Activated CD4-positive, alpha-beta T cell treated with anti-CD3 and anti-CD28 coated beads for 36 hours (primary cell): ENCODE measurements at regions of chr11 and their contacts with region 1.

Region 1: DNA sequence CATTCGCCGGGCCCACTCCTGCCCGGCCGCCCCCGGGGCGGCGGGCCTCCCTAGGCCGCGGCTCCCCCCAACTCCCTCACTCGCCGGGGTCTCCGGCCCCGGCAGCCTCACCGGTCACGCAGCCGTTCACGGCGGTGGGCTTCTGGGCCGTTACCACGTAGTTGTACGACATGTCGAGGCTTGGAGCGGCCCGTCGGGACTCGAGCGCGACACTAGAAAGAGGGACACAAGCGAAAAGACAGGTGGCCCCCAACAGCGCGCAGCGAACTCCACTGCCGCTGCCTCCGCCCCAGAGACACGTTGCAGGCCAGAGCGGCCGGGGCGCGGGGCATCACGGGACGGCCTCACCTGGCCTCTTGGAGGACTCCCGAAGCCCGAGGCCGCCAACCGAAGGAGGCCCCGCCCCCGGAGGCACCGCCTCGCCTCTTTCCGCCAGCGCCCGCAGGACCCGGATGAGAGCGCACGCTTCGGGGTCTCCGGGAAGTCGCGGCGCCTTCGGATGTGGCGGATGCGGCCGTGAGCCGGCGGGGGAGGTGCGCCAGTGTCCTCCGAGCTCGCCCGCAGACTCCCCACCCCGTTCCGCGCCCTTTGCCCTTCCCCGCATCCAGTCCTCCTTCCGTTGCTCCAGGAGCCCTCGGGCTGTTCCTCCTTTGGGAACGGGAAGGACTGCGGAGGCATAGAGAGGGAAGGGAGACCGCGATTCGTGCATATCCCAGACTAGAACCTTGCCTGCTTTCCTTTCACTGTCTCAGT is at the starts of genes DDB1 and TKFC:
- DNase-seq: peak; percentile 99
- ATAC-seq: peak; percentile 94
- H3K4me3 Mint-ChIP-seq: peak within 1 kb of the TSS; percentile 97
- H3K27ac Mint-ChIP-seq: peak within 1 kb of the TSS; percentile 100
- H3K4me1 Mint-ChIP-seq: peaks cover 64% of the 10 kb centered on the region
- H3K27me3 Mint-ChIP-seq: no peaks in the 10 kb centered on the region
- total RNA-seq, gene DDB1: 258 to 268 TPM
- total RNA-seq, gene TKFC: 100 to 107 TPM

Region 2: GRCh38 chr11:60906132-60906972 is 426.6 kb before region 1 on chr11 and contains the start of gene PRPF19:
- CTCF ChIA-PET with region 1: no interaction called
- POLR2A ChIA-PET with region 1: no interaction called
- intact Hi-C with region 1: loop called in 1 of 2 experiments (anchors 1 kb)
- DNase-seq: peak; percentile 99
- ATAC-seq: peak; percentile 97
- H3K4me3 Mint-ChIP-seq: peak within 1 kb of the TSS; percentile 86
- H3K27ac Mint-ChIP-seq: peak within 1 kb of the TSS; percentile 94
- H3K4me1 Mint-ChIP-seq: peaks cover 41% of the 10 kb centered on the region
- H3K27me3 Mint-ChIP-seq: no peaks in the 10 kb centered on the region
- total RNA-seq, gene PRPF19: 148 to 197 TPM

Region 3: DNA sequence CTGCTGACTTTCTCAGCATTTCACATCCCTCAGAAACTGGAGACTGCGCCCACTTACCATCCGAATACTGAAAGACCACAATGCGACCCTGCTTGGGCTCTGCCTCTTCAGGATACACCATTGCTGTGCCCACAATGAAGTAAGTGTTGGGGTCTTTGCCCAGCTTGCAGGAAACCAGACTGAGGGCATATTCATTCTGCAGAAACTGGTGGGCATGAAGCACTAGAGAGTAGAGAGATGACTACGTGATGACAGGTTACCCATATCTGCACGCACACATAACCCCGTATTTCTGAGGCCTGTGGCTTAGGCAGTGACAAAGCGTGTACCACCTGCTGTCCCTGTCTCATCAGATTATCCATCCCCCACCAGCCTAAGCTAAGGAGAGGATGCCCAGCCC is 23.2 kb before region 1 on chr11:
- CTCF ChIA-PET with region 1: interaction called, 10 read pairs
- POLR2A ChIA-PET with region 1: no interaction called
- intact Hi-C with region 1: no loop called
- DNase-seq: no peak
- ATAC-seq: peak; percentile 61
- H3K4me3 Mint-ChIP-seq: no peak overlapping the region
- H3K27ac Mint-ChIP-seq: no peak overlapping the region
- H3K4me1 Mint-ChIP-seq: no peaks in the 10 kb centered on the region
- H3K27me3 Mint-ChIP-seq: no peaks in the 10 kb centered on the region

Region 4: DNA sequence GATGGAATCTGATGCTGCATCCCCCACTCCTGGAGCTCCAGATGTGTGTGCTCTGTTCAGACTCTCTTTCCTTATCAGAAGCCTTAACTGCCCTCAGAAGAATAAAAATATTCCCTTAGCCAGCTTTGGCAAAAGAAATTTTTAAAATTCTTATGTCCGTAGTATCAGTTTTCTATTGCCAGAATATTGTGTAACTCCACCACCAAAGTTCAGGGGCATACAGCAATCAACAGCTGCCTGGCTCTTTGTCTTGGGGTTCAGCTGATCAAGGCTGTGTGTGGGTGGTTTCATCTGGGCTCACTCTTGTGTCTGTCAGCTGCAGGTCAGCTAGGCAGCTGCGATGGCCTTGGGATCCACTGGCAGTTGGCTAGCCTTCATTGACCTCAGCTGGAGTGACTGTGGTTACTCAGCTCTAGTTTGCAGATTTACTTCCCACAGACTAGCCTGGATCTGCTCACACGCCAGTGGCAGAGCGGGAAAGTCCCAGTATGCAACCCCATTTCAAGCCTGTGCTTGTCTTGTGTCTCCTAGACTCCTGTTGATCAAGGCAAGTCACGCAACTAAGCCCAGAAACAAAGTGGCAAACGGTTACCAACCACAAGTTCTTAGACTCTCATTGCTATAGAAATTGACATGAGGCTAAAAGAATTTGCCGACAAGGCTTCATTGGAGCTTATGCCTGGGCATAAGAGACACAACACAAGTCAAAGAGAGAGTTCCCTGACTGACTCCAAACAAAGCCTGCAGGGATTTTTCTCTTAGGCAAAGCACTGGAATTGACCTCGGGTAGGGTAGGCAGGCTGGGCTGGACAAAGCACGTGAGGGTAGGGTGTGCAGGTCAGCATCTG is 36.6 kb after region 1 on chr11:
- CTCF ChIA-PET with region 1: interaction called, 31 read pairs
- POLR2A ChIA-PET with region 1: interaction called, 3 read pairs
- intact Hi-C with region 1: no loop called
- DNase-seq: no peak
- ATAC-seq: no peak
- H3K4me3 Mint-ChIP-seq: no peak overlapping the region
- H3K27ac Mint-ChIP-seq: no peak overlapping the region
- H3K4me1 Mint-ChIP-seq: peaks cover 7% of the 10 kb centered on the region
- H3K27me3 Mint-ChIP-seq: no peaks in the 10 kb centered on the region

Region 5: GRCh38 chr11:61429691-61430582 is 97.0 kb after region 1 on chr11 and contains the starts of genes CPSF7 and SDHAF2:
- CTCF ChIA-PET with region 1: interaction called, 30 read pairs
- POLR2A ChIA-PET with region 1: interaction called, 4 read pairs
- intact Hi-C with region 1: loop called (anchors 1 to 2 kb)
- DNase-seq: peak; percentile 99
- ATAC-seq: peak; percentile 92
- H3K4me3 Mint-ChIP-seq: peak within 1 kb of the TSS; percentile 92
- H3K27ac Mint-ChIP-seq: peak within 1 kb of the TSS; percentile 97
- H3K4me1 Mint-ChIP-seq: peaks cover 59% of the 10 kb centered on the region
- H3K27me3 Mint-ChIP-seq: no peaks in the 10 kb centered on the region
- total RNA-seq, gene CPSF7: 108 to 179 TPM
- total RNA-seq, gene SDHAF2: 23.6 to 33.6 TPM

Region 6: DNA sequence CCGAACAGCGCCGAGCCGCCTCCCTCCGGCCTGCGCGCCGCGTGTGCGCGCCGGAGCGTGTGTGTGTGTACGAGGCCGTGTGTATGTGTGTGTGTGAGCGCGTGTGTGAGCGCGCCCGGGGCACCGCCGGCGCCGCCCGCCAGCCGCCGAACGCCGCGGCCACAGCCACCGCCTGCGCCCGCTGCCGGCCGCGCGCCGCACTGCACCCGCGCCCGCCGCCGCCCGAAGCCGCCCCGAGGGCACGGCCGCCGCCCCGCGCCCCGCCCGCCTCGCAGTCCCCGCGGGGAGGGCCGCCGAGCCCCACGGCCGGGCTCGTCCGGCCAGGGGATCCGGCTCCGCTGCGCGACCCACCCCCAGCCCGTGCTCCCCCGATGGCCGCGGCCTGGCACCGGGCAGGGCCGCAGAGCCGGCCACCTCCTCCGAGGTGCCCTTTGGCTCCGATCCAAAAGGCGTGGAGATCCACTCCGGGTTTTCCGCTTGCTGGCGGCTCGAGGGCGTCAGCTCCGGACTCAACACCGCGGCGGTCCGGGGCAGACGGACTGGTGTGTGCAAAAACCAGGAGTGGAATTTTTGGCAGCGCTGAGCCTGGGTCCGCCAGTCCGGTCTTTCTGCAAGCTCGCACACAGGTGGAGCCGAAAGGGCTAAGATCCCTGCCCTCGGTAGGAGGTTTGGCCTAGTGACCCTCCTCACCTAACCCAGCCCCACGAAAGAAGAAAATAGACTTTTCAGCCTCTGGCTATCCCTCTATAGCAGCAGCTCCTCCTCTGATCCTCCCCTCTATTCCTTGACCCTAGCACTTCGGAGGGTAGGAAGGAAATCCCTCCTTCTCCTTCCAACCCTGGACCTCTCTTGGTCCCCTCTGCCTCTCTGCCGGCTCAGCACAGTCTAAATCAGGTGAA is 248.3 kb after region 1 on chr11 and contains the start of gene SYT7:
- CTCF ChIA-PET with region 1: no interaction called
- POLR2A ChIA-PET with region 1: no interaction called
- intact Hi-C with region 1: loop called in 1 of 2 experiments (anchors 5 kb)
- DNase-seq: peak; percentile 97
- ATAC-seq: peak; percentile 91
- H3K4me3 Mint-ChIP-seq: peak within 1 kb of the TSS; percentile 64
- H3K27ac Mint-ChIP-seq: no peak within 1 kb of the TSS
- H3K4me1 Mint-ChIP-seq: peaks cover 12% of the 10 kb centered on the region
- H3K27me3 Mint-ChIP-seq: peaks cover 35% of the 10 kb centered on the region
- total RNA-seq, gene SYT7: 0.04 TPM in 1 of 2 experiments, not detected in the other